Caco-2 (cell line): ENCODE measurements at regions of chr18 and their contacts with region 1.

Region 1: DNA sequence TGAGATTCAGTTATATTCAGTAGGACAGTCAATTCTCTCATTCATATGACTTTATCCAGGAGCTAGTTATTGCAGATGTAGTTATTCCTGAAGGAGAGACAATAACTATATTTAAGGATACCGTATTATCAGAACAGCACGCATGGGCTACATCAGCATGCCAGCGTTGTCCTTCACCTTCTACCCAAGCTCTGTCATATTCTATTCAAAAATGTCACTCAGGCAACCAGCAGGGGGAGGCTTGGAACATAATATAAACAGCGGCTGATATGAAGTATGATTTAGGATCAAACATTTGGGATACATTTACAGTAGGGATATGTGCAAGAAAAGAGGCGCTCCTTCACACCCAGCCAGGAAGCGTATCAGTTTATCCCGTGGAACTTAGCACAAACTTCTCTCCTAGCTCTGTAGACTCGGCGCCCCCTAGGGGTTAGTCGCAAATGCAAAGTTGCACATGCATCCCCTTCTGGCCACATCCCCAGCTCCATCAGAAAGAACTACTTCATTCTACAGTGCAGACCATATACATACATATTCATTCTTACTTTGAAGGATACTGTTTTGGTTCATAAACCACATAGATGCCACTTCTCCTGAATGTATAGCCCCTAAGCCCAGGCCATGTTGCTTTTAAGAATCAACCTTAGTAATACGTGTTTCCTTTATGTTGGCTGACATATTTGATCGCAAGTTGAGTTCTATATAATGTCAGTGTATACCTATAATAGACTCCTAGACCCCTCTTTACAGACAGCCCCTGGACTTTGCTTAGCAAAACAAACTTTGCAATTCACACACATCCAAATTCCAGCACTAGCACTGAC is 759.4 kb downstream of the ADCYAP1 start:
- DNase-seq: peak; percentile 58 to 78
- H3K4me3 ChIP-seq: no peak overlapping the region
- H3K4me3 Mint-ChIP-seq: no peak overlapping the region
- H3K27ac Mint-ChIP-seq: no peak overlapping the region
- H3K4me1 ChIP-seq: no peaks in the 10 kb centered on the region
- H3K4me1 Mint-ChIP-seq: no peaks in the 10 kb centered on the region
- H3K27me3 ChIP-seq: no peaks in the 10 kb centered on the region
- H3K27me3 Mint-ChIP-seq: no peaks in the 10 kb centered on the region
- CTCF ChIP-seq: peak; percentile 90 to 94

Region 2: DNA sequence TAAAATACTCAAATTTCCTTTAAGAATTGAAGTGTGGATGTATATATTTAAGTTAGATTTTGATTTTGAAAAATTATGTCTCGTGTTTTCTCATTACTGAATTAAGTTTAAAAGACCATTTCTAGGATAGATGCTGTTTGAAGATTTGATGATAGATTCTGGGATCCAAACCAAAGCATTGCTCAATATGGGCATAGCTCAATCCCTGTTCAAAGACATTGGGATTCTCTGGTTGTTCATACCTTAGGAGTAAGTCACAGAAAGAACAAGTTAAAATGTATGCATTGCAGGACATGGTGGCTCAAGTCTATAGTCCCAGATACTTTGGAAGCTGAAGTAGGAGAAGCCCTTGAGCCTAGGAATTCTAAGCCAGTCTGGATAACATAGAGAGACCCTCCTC is 137.1 kb before region 1 on chr18:
- CTCF ChIA-PET with region 1: no interaction called
- POLR2A ChIA-PET with region 1: no interaction called
- intact Hi-C with region 1: no loop called
- DNase-seq: no peak
- H3K4me3 ChIP-seq: no peak overlapping the region
- H3K4me3 Mint-ChIP-seq: no peak overlapping the region
- H3K27ac Mint-ChIP-seq: no peak overlapping the region
- H3K4me1 ChIP-seq: no peaks in the 10 kb centered on the region
- H3K4me1 Mint-ChIP-seq: no peaks in the 10 kb centered on the region
- H3K27me3 ChIP-seq: no peaks in the 10 kb centered on the region
- H3K27me3 Mint-ChIP-seq: peaks cover 2% of the 10 kb centered on the region
- CTCF ChIP-seq: no peak

Region 3: GRCh38 chr18:1585879-1586488 is 78.1 kb before region 1 on chr18:
- CTCF ChIA-PET with region 1: no interaction called
- POLR2A ChIA-PET with region 1: no interaction called
- intact Hi-C with region 1: loop called (anchors 1 kb)
- DNase-seq: peak in 1 of 2 experiments; percentile 9
- H3K4me3 ChIP-seq: no peak overlapping the region
- H3K4me3 Mint-ChIP-seq: no peak overlapping the region
- H3K27ac Mint-ChIP-seq: no peak overlapping the region
- H3K4me1 ChIP-seq: no peaks in the 10 kb centered on the region
- H3K4me1 Mint-ChIP-seq: no peaks in the 10 kb centered on the region
- H3K27me3 ChIP-seq: no peaks in the 10 kb centered on the region; the same call in none of the 2 replicates
- H3K27me3 Mint-ChIP-seq: peaks cover 11% of the 10 kb centered on the region
- CTCF ChIP-seq: peak in 1 of 2 experiments; percentile 48

Region 4: DNA sequence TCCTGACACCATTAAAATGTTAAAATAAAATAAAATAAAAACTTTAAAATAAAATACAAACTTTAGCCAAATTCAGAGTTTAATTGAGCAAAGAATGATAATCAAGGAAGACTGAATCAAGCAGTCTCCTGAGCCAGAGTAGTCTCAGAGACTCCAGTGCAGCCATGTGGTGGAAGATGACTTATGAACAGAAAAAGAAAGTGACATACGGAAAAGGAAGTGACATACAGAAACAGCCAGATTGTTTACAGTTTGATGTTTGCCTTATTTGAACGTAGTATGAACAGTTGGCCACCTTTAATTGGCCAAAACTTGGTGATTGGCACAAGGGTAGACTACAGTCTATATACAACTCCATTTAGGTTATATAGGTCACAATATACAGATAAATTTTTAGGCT is 27.8 kb after region 1 on chr18:
- CTCF ChIA-PET with region 1: interaction called, 10 read pairs
- POLR2A ChIA-PET with region 1: no interaction called
- intact Hi-C with region 1: no loop called
- DNase-seq: no peak
- H3K4me3 ChIP-seq: no peak overlapping the region
- H3K4me3 Mint-ChIP-seq: no peak overlapping the region
- H3K27ac Mint-ChIP-seq: no peak overlapping the region
- H3K4me1 ChIP-seq: no peaks in the 10 kb centered on the region
- H3K4me1 Mint-ChIP-seq: no peaks in the 10 kb centered on the region
- H3K27me3 ChIP-seq: no peaks in the 10 kb centered on the region
- H3K27me3 Mint-ChIP-seq: peaks cover 2% of the 10 kb centered on the region
- CTCF ChIP-seq: no peak

Region 5: DNA sequence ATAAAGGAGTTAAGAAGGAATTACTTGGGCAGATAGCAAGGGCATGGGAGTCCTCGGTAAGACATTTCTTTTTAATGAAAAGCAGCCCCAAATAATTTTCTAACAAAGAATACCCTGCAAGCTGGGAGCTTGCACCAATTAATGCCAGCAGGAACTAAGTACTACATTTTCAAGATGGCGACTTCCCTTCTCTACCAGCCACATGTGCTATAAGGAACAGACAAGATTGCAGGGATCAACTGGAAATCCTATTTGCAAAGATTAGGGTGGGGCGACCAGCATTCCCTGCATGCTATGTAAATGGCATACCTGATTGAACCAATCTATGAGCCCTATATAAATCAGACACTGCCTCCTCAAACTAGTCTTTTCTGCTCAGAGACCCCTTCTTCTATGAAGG is 68.1 kb after region 1 on chr18:
- CTCF ChIA-PET with region 1: no interaction called
- POLR2A ChIA-PET with region 1: no interaction called
- intact Hi-C with region 1: no loop called
- DNase-seq: no peak
- H3K4me3 ChIP-seq: no peak overlapping the region
- H3K4me3 Mint-ChIP-seq: no peak overlapping the region
- H3K27ac Mint-ChIP-seq: no peak overlapping the region
- H3K4me1 ChIP-seq: no peaks in the 10 kb centered on the region
- H3K4me1 Mint-ChIP-seq: no peaks in the 10 kb centered on the region
- H3K27me3 ChIP-seq: no peaks in the 10 kb centered on the region
- H3K27me3 Mint-ChIP-seq: peaks cover 6% of the 10 kb centered on the region
- CTCF ChIP-seq: no peak

Region 6: DNA sequence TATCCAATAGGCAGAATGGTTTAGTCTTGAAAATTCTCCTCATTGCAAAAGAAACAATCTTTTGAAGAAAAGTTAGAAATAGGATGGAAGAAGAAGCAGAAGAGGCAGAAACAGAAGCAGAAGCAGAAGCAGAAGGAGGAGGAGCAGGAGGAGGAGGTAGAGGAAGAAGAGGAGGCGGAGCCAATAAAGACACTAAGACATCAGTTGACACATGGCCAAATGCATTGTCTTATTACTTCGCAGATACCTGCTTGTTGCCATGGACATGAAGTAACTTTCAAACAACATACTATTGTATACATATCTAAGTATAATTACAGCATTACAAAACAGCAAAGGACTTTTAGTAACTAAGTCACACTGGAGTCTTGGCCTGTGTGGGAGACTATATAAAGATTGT is 300.9 kb after region 1 on chr18:
- CTCF ChIA-PET with region 1: no interaction called
- POLR2A ChIA-PET with region 1: no interaction called
- intact Hi-C with region 1: no loop called
- DNase-seq: no peak
- H3K4me3 ChIP-seq: no peak overlapping the region
- H3K4me3 Mint-ChIP-seq: no peak overlapping the region
- H3K27ac Mint-ChIP-seq: no peak overlapping the region
- H3K4me1 ChIP-seq: 0 out of 2 replicates have a peak, but pooled peaks cover 6% of the 10 kb centered on the region
- H3K4me1 Mint-ChIP-seq: peaks cover 6% of the 10 kb centered on the region
- H3K27me3 ChIP-seq: no peaks in the 10 kb centered on the region
- H3K27me3 Mint-ChIP-seq: no peaks in the 10 kb centered on the region
- CTCF ChIP-seq: no peak